ENCODE measurements at regions of chr14 and their contacts with region 1.

Region 1: DNA sequence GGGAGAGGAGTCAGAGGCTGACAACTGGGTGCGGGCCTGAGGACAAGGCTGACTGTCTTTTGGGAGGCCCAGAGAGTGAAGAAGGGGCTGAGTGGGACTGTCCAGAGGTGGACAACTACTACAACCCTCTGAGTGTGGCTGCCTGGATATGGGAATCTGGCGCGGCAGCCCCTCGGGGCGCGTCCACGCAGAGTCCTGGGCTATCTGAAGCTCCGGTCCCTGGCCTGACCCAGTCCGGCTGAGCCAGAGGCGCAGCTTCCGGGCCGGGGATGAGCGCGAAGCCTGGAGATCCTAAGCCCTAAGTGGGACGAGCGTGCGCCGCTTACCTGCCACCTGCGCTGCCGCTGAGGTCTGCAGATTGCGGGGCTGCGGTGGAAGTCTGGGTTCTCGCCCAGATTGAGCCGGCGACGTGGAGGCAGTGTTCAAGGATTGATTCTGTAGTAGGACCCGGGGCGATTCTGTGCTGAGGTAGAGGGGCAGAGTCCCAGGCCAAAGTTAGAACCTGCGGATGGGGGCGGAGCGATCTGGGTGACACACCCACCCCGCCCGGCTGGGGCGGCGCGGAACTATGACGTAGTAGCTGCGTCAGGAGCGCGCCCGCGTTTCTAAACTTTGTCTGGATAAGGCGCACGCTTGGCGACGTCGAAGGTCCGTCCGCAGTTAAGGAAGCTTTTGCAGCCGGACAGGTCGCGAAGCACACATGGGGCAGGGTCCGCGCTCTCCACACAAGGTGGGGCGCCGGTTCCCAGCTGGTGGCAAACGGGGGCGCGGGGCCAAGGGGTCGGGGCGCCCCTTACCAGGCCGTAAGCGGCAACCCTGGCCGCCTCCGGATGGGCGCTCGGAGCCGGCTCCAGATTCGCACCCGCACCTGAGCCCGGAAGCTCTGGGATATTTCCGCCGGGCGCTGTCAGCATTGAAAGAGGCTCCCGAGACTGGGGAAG is at the starts of genes DHRS1 and NOP9:
- DNase-seq: peak; percentile 94
- ATAC-seq: peak; percentile 83
- H3K4me3 Mint-ChIP-seq: peak within 1 kb of the TSS; percentile 91
- H3K27ac Mint-ChIP-seq: peak within 1 kb of the TSS; percentile 91
- H3K4me1 Mint-ChIP-seq: peaks cover 53% of the 10 kb centered on the region
- H3K27me3 Mint-ChIP-seq: no peaks in the 10 kb centered on the region
- total RNA-seq, gene DHRS1: 28.6 to 33.9 TPM
- total RNA-seq, gene NOP9: 35.2 to 36.7 TPM

Region 2: DNA sequence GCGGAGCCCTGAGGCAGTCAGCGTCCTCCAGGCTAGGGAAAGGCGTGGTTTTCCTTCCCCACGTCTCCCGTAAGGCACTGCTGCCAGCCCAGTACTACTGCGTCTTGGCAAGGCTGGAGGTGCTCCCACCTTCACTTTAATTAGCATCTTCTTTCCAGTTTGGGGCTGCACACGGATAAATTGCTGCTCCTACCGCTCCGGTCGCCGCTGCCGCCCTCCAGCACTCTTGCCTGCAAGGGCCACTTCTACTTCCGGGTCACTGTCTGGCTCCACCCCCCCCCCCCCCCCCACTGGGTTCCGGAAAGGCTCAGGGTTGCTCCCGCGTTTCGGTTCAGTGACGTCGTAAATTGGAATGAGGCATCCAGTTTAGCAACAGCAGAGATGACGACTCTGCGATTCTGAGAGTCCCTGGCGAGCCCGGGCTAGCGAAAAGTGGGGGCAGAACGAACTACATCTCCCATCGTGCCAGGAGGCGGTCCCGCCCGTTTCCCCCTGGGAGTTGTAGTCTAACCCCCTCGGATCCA is 67.3 kb before region 1 on chr14 and contains the start of gene NEDD8:
- CTCF ChIA-PET with region 1: interaction called, 801 read pairs
- POLR2A ChIA-PET with region 1: interaction called, 4 read pairs
- DNase-seq: peak; percentile 93
- ATAC-seq: peak; percentile 89
- H3K4me3 Mint-ChIP-seq: peak within 1 kb of the TSS; percentile 89
- H3K27ac Mint-ChIP-seq: peak within 1 kb of the TSS; percentile 90
- H3K4me1 Mint-ChIP-seq: peaks cover 46% of the 10 kb centered on the region
- H3K27me3 Mint-ChIP-seq: no peaks in the 10 kb centered on the region
- total RNA-seq, gene NEDD8: 214 to 222 TPM

Region 3: DNA sequence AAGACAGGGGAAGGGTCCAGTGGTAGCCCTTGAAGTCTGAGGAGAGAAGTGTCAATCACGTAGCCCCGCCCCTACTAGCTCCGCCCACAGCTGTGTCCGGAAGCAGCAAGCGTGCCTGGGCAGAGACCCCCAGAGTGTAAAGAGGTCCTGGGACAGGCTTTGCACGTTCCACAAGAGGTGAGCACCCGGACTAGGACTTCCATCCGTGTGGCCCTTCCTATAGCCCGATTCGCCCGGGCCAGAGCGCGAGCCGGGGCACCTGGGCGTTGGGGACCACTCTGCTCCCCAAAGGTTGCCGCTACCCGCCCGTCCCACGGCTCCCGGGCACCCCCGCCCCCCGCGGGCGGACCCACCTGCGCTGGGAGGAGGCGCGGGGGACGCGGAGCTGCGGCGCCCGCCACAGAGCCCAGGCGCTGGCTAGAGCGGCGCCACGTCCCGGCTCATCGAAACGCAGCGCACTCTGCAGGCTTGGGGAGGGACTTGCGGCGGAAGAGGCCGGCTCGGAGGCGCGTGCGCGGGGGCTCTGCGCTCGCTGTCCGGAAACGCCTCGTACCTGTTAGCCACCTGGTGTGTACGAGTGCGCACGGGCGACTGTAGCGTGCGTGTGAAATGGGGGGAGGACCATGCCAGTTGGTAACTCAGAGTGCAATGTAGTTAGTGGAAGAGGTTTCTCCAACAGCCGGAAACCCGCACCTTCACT is 28.2 kb before region 1 on chr14 and contains the start of gene RABGGTA:
- CTCF ChIA-PET with region 1: interaction called, 54 read pairs
- POLR2A ChIA-PET with region 1: interaction called, 12 read pairs
- DNase-seq: peak; percentile 93
- ATAC-seq: peak; percentile 94
- H3K4me3 Mint-ChIP-seq: peak within 1 kb of the TSS; percentile 90
- H3K27ac Mint-ChIP-seq: peak within 1 kb of the TSS; percentile 91
- H3K4me1 Mint-ChIP-seq: peaks cover 47% of the 10 kb centered on the region
- H3K27me3 Mint-ChIP-seq: no peaks in the 10 kb centered on the region
- total RNA-seq, gene RABGGTA: 47.7 to 51.8 TPM

Region 4: GRCh38 chr14:24279301-24280186 is 20.0 kb before region 1 on chr14:
- CTCF ChIA-PET with region 1: interaction called, 55 read pairs
- POLR2A ChIA-PET with region 1: interaction called, 6 read pairs
- DNase-seq: peak; percentile 44
- ATAC-seq: peak; percentile 69
- H3K4me3 Mint-ChIP-seq: no peak overlapping the region
- H3K27ac Mint-ChIP-seq: peak overlapping the region; percentile 73
- H3K4me1 Mint-ChIP-seq: peaks cover 30% of the 10 kb centered on the region
- H3K27me3 Mint-ChIP-seq: no peaks in the 10 kb centered on the region

Measured in activated CD8-positive, alpha-beta T cell treated with anti-CD3 and anti-CD28 coated beads, Interleukin-2, amount 10 ng/mL, durations not matched to agents 7 days and 5 days (primary cell).